ENCODE measurements at regions of chr9 and their contacts with region 1.

Region 1: DNA sequence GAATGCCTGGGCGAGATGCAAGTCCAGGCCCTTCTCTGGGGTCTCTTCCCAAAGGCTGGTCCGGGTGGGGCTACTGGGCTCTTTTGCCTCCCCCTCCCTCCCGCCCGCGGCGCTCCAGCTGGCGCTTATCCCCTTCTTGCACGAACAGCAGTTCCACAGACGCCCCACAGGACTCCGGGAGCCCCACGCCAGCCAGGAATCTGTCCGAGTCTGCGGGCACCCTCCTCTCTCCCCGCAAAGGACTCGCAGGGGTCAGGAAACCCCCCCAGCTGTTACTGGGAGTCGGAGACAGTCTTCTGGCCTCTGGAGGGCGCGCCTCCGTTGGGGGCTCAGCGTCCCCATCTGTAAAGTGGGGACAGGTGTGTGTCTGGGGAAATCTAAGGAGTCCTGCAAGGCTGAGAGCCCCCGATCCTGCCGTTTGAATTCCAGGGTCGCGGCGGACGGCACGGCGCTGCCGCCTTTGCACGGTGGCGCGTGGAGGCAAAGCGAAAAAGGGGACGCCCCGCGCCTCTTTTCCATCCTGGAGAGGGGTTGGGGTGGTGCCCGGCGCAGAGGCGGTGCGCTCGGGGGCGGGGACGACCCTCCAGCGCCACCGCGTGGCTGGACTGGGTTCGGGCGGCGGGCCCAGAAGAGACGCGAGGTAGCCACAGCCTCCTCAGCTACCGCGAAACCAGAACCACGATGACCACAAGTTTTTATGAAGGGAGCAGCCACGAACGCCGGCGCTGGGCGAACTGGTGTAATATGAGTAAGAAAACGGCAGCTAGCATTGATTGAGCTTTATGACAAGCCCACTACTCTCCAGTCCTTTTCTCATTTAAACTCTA is 2.9 kb upstream of the CCIN start:
- DNase-seq: peak; percentile 96
- H3K4me3 ChIP-seq: peak overlapping the region; percentile 48 to 66
- H3K27ac ChIP-seq: peak overlapping the region in 1 of 2 experiments; percentile 62; a peak in 2 of 4 replicates
- H3K4me1 ChIP-seq: peaks cover 26 to 38% of the 10 kb centered on the region in 2 experiments; a peak in 3 of 4 replicates
- H3K27me3 ChIP-seq: no peaks in the 10 kb centered on the region
- CTCF ChIP-seq: peak; percentile 84
- EP300 ChIP-seq: no peak
- RAD21 ChIP-seq: peak; percentile 88

Region 2: DNA sequence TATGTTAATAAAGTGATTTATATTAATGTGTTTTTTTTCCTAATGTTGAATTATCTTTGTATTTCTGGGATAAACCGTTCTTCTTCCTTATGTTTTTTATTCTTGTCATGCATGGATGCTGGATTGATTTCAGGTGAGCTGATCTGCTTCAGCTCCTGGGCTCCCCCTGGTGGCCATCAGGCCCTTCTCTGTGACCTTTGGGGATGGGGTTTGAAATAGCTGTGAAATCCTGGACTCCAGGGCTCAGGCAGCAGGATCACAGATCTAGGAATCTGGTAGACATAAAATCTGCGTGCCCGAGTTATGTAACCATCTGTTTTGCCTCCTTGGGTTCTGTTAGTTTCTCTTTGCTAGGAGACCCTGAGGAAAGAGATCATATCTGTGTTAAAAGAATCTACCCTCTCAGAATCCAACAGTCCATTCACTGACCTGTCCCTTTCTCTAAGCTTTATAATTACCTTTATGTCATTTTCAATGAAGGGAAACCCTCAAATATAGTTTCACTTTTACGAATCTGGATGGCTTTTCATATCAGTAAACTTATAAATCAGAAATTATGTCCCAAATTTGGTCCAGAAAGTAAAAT is 284.0 kb before region 1 on chr9:
- CTCF ChIA-PET with region 1: no interaction called
- POLR2A ChIA-PET with region 1: no interaction called
- DNase-seq: peak; percentile 83
- H3K4me3 ChIP-seq: no peak overlapping the region; a peak in 1 of 4 replicates
- H3K27ac ChIP-seq: no peak overlapping the region
- H3K4me1 ChIP-seq: no peaks in the 10 kb centered on the region; a peak in 1 of 4 replicates
- H3K27me3 ChIP-seq: no peaks in the 10 kb centered on the region
- CTCF ChIP-seq: peak; percentile 99
- EP300 ChIP-seq: no peak
- RAD21 ChIP-seq: peak; percentile 84

Region 3: GRCh38 chr9:35954942-35955546 is 211.3 kb before region 1 on chr9:
- CTCF ChIA-PET with region 1: interaction called, 17 read pairs
- POLR2A ChIA-PET with region 1: no interaction called
- DNase-seq: peak; percentile 65
- H3K4me3 ChIP-seq: no peak overlapping the region; a peak in 1 of 4 replicates
- H3K27ac ChIP-seq: no peak overlapping the region
- H3K4me1 ChIP-seq: peaks cover 0 to 9% of the 10 kb centered on the region in 2 experiments; a peak in 1 of 4 replicates
- H3K27me3 ChIP-seq: no peaks in the 10 kb centered on the region
- CTCF ChIP-seq: peak; percentile 88
- EP300 ChIP-seq: no peak
- RAD21 ChIP-seq: peak; percentile 84

Region 4: DNA sequence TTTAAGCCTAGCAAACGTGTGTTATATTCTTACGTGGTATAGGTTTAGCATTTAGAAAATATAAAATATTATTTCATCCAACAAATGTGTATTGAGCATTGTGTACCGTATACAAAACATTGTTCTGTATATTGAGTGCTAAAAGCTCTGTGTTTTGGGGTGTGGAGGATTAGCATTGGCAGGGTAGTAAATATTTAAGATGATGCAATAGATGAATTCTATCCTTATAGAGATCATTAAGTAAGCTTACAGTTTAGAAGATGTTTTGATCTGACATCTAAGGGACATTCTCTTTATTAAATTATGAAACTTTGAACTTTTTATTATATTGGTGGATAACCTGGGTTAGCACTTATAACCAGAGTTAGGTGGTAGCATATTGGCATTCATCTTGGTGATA is 78.3 kb before region 1 on chr9:
- CTCF ChIA-PET with region 1: interaction called, 17 read pairs
- POLR2A ChIA-PET with region 1: no interaction called
- DNase-seq: no peak
- H3K4me3 ChIP-seq: no peak overlapping the region
- H3K27ac ChIP-seq: no peak overlapping the region
- H3K4me1 ChIP-seq: peaks cover 0 to 7% of the 10 kb centered on the region in 2 experiments; a peak in 2 of 4 replicates
- H3K27me3 ChIP-seq: no peaks in the 10 kb centered on the region
- CTCF ChIP-seq: no peak
- EP300 ChIP-seq: no peak
- RAD21 ChIP-seq: no peak

Region 5: DNA sequence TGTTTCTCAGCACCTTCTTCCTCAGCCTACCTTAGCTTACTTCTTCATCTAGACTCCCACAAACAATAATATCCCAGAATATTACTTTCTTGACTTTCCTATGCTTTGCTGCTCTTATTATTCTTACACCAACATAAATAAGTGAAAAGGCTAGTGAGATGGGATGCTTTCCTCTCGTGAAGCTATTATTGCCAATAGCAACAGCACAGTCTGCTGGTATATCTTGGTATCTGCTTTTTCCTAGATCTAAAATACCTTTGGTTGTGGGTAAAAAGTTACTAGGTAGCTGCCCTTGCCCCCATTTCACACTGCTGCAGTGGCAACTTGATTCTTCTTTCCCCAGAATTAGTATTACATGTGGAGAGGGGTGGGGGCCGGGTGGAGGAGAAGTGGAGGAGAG is 55.9 kb before region 1 on chr9:
- CTCF ChIA-PET with region 1: interaction called, 27 read pairs
- POLR2A ChIA-PET with region 1: interaction called, 7 read pairs
- DNase-seq: no peak
- H3K4me3 ChIP-seq: no peak overlapping the region
- H3K27ac ChIP-seq: no peak overlapping the region
- H3K4me1 ChIP-seq: peaks cover 0 to 7% of the 10 kb centered on the region in 2 experiments; a peak in 2 of 4 replicates
- H3K27me3 ChIP-seq: no peaks in the 10 kb centered on the region
- CTCF ChIP-seq: peak; percentile 40
- EP300 ChIP-seq: no peak
- RAD21 ChIP-seq: peak; percentile 26; the same call in 1 of the 2 replicates

Region 6: DNA sequence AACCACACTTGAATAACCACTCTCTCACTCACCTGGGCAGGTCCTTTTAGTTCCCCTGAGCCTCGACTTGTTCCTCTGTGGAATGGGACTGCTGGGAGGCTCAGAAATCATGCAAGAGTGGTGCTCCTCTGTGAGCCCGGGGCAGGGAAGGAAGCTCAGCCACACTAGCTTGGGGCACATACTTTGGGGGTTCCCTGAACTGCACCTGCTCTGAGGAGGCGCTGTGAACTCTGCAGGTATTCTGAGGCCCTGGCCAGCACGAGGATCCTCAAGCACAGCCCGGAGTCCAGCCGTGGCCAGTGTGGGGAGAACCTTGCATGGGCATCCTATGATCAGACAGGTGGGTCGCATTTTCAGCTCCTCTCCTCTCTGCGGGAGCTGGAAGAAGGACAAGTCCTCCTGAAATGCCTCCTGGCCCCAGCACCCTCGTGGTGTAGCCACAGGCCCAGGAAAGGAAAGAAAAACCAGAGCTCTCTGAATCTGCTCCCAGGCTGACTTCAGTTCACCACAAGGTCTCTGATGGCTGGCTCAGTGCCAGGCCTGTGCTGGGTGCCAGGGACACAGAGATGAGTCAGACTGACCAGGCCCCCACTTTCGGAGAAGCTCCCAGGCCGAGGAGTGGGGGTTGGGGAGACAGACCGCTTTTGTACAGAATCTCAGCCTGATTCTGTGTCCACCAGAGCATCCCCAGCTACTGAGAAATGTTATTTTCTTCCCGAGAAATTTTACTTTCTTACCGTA is 17.8 kb before region 1 on chr9:
- CTCF ChIA-PET with region 1: interaction called, 105 read pairs
- POLR2A ChIA-PET with region 1: interaction called, 38 read pairs
- DNase-seq: peak; percentile 94
- H3K4me3 ChIP-seq: peak overlapping the region in 1 of 2 experiments; percentile 6; a peak in 1 of 4 replicates
- H3K27ac ChIP-seq: peak overlapping the region; percentile 89 to 98
- H3K4me1 ChIP-seq: peaks cover 15 to 41% of the 10 kb centered on the region in 2 experiments; a peak in 3 of 4 replicates
- H3K27me3 ChIP-seq: no peaks in the 10 kb centered on the region
- CTCF ChIP-seq: no peak
- EP300 ChIP-seq: peak; percentile 72 to 87
- RAD21 ChIP-seq: peak; percentile 44

Region 7: DNA sequence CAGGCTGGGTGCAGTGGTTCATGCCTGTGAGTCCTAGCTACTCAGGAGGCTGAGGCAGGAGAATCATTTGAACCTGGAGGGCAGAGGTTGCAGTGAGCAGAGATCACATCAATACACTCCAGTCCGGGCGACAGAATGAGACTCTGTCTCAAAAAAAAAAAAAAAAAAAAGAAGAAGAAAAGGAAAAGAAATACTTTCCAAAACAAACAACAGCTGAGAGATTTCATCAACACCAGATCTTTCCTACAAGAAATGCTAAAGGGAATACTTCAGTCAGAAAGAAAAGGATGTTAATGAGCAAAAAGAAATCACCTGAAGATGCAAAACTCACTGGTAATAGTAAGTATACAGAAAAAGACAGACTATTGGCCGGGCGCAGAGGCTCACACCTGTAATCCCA is 11.3 kb after region 1 on chr9:
- CTCF ChIA-PET with region 1: interaction called, 14 read pairs
- POLR2A ChIA-PET with region 1: no interaction called
- DNase-seq: no peak
- H3K4me3 ChIP-seq: no peak overlapping the region
- H3K27ac ChIP-seq: no peak overlapping the region
- H3K4me1 ChIP-seq: no peaks in the 10 kb centered on the region
- H3K27me3 ChIP-seq: no peaks in the 10 kb centered on the region
- CTCF ChIP-seq: no peak
- EP300 ChIP-seq: no peak
- RAD21 ChIP-seq: no peak

Region 8: GRCh38 chr9:36268007-36268427 is 101.7 kb after region 1 on chr9:
- CTCF ChIA-PET with region 1: no interaction called
- POLR2A ChIA-PET with region 1: no interaction called
- DNase-seq: no peak
- H3K4me3 ChIP-seq: no peak overlapping the region
- H3K27ac ChIP-seq: no peak overlapping the region
- H3K4me1 ChIP-seq: no peaks in the 10 kb centered on the region
- H3K27me3 ChIP-seq: no peaks in the 10 kb centered on the region
- CTCF ChIP-seq: no peak
- EP300 ChIP-seq: no peak
- RAD21 ChIP-seq: no peak

Measured in SK-N-SH (cell line).